ENCODE measurements at regions of chr9 and their contacts with region 1.

Region 1: GRCh38 chr9:107239474-107239873 is 43.6 kb upstream of the RAD23B start:
- DNase-seq: no peak
- H3K4me3 ChIP-seq: no peak overlapping the region
- H3K27ac ChIP-seq: no peak overlapping the region
- H3K4me1 ChIP-seq: no peaks in the 10 kb centered on the region
- H3K27me3 ChIP-seq: no peaks in the 10 kb centered on the region
- CTCF ChIP-seq: peak in 3 of 6 experiments; percentile 22 to 45 (median 30)
- POLR2A ChIP-seq: no peak

Region 2: GRCh38 chr9:107340920-107341632 is 101.6 kb after region 1 on chr9:
- intact Hi-C with region 1: loop called (anchors 5 kb)
- DNase-seq: peak; percentile 75 to 86
- H3K4me3 ChIP-seq: no peak overlapping the region
- H3K27ac ChIP-seq: no peak overlapping the region
- H3K4me1 ChIP-seq: peaks cover 0 to 12% of the 10 kb centered on the region in 2 donors
- H3K27me3 ChIP-seq: no peaks in the 10 kb centered on the region
- CTCF ChIP-seq: peak; percentile 68 to 85 (median 79)
- POLR2A ChIP-seq: no peak